Activated naive CD4-positive, alpha-beta T cell treated with anti-CD3 and anti-CD28 coated beads for 36 hours (primary cell): ENCODE measurements at regions of chr3 and their contacts with region 1.

Region 1: DNA sequence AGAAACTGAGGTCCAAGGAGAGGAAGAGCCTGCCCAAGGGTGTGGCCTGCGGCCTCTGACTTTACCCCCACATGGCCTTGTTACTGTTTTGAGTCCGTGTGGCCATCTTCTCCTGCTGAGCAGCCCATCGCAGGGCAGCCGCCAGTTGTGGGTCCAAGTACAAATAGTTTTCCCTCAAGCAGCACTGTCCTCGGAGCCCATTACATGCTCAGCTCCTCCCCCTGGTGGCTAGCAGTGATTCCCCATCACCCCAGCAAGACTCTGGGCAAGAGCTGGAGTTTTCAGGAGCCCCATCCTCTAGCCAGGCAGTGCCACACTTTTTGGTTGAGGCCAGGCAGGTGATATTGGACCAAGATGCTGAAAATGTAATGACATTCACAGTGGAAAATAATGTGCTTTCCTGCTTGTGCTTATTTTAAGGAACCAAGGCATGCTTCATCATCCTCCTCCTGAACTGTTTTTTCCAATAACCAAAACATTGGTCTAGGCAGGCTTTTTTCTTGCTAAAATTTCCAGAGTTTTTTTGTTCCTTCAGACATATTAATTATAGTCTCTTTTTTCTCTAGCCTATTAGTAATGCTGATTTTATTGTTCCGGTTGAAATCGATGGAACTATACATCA is 23.2 kb upstream of the VILL start:
- DNase-seq: peak; percentile 81
- H3K4me3 Mint-ChIP-seq: no peak overlapping the region
- H3K27ac Mint-ChIP-seq: no peak overlapping the region
- H3K4me1 Mint-ChIP-seq: peaks cover 4% of the 10 kb centered on the region
- H3K27me3 Mint-ChIP-seq: no peaks in the 10 kb centered on the region

Region 2: GRCh38 chr3:36944012-36944640 is 1023.2 kb before region 1 on chr3:
- CTCF ChIA-PET with region 1: no interaction called
- intact Hi-C with region 1: no loop called
- DNase-seq: peak; percentile 53
- H3K4me3 Mint-ChIP-seq: peak overlapping the region; percentile 78
- H3K27ac Mint-ChIP-seq: no peak overlapping the region
- H3K4me1 Mint-ChIP-seq: peaks cover 10% of the 10 kb centered on the region
- H3K27me3 Mint-ChIP-seq: no peaks in the 10 kb centered on the region

Region 3: DNA sequence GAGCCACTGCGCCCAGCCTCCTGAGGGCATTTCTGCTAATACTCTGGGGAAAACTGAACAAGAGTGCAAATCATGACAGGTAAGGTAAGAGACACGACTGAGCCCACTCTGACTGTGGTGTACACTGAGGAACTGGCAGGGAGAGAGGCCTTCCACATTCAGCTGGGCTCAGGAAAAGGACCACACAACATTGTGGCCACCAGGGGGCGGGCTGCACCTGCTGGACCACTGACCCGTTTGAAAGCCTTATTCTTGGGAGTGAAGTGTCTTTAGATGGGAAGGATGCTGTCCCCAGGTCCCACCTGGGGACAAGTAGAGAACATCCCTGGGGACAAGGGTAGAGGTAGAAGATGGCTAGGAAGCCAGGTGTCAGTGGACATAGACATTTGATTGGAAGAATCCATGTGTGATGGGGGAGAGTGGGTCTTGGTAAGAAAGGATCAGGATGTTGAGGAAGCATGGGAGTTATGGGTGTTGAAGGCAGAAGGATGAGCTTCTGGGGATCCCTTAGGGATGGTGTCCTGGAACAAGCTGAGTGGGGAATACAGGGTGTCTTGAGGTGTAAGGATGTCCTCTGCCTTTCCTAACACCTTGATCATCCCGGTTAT is 111.9 kb before region 1 on chr3:
- CTCF ChIA-PET with region 1: interaction called, 4 read pairs
- intact Hi-C with region 1: loop called (anchors 1 kb)
- DNase-seq: peak; percentile 88
- H3K4me3 Mint-ChIP-seq: no peak overlapping the region
- H3K27ac Mint-ChIP-seq: no peak overlapping the region
- H3K4me1 Mint-ChIP-seq: peaks cover 6% of the 10 kb centered on the region
- H3K27me3 Mint-ChIP-seq: no peaks in the 10 kb centered on the region

Region 4: DNA sequence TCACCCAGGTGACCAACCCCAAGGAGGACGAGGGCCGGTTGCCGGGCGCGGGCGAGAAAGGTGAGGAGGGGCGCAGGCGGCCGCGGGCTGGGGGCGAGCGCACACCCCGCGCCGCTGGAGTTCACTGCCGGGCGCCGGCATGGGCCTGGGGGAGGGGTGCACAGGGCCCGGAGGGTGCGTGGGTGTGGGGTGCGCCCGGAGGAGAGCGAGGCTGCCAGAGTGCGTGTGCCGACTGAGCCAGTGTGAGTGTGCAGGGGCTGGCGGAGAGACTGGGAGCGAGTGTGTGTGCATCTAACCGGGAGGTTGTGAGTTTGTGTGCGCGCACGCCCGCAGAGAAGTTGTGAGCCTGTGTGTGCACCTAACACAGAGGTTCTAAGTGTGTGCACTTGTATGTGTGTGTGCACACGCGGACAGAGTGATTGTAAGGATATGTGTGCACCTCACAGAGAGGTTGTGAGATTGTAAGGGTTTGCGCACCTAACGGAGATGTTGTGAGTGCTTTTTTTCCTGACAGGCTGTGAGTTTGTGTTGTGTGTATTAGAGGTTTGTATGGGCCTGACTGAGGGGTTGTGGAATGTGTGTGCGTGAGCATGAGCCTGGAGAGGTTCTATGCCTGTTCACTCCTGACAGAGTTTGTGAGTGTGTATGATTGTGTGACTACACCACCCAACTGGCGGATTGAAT is 105.0 kb before region 1 on chr3:
- CTCF ChIA-PET with region 1: interaction called, 12 read pairs
- intact Hi-C with region 1: no loop called
- DNase-seq: peak; percentile 54
- H3K4me3 Mint-ChIP-seq: peak overlapping the region; percentile 73
- H3K27ac Mint-ChIP-seq: no peak overlapping the region
- H3K4me1 Mint-ChIP-seq: peaks cover 18% of the 10 kb centered on the region
- H3K27me3 Mint-ChIP-seq: peaks cover 2% of the 10 kb centered on the region